SK-MEL-5 (cell line): ENCODE measurements at regions of chr6 and their contacts with region 1.

Region 1: GRCh38 chr6:7561153-7561964 is 19.9 kb downstream of the DSP start:
- DNase-seq: no peak

Region 2: DNA sequence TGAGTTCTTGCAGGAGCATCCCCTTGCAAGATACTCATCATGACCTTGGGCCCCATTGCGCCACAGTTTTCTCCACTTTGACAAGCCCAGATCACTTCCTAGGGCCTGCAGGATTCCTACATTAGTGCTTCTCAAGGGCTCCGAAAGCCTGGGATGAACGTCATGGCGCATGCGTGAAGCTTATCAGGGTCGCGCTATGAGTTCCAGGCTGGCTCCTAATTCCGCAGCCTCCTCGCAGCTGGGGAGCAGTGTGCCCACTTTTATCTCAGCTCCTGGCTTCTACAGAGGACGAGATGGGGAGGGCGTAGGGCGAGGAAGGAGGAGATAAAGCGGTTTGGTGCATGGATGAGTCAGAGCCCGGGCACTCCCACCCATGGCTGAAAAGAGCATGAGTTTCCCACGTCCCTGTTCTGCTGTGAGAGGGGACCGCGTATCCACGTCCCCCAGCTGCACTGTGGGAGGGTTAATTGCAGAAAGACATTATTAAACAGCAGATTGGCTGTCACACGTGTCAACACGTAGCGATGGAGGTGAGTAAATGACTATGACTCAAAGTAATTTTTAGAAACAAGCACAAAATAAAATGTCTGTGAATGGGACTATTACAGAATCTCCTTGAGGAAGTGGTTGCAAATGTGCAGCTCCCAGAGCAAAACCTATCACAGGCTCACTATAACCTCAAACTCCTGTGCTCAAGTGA is 92.8 kb before region 1 on chr6:
- in situ Hi-C with region 1: loop called (anchors 25 kb)
- DNase-seq: peak; percentile 68

Region 3: DNA sequence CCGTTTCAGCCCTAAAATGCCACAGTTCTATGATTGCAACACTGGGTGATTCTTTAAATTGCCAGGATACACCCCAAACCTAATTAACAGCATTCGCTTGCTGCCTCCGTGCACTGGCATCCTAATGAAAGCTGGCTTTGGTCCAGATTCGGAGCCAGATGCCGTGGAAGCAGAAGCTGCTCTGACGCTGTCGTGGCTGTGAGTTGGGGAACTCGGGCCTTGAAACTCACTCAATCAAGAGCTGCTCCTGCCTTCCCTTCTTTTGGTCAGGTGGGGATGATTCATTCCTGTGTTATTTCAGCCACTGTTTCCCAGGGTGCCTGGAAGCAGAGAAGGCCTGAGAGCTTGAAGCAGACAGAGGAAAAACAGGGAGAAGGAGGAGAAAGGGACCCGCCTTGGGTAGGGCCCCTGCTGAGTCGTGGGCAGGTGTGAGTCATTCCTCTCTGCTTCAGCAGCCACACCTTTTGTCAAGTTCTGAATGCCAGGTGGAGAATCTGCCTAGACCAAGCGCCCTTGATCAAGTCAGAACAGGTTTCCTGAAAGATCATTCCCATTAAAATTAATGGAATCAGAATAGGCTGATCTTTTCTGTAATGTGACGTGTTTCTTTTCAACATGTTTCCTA is 56.1 kb before region 1 on chr6:
- in situ Hi-C with region 1: no loop called
- DNase-seq: peak; percentile 84